ENCODE measurements at regions of chr16 and their contacts with region 1.

Region 1: DNA sequence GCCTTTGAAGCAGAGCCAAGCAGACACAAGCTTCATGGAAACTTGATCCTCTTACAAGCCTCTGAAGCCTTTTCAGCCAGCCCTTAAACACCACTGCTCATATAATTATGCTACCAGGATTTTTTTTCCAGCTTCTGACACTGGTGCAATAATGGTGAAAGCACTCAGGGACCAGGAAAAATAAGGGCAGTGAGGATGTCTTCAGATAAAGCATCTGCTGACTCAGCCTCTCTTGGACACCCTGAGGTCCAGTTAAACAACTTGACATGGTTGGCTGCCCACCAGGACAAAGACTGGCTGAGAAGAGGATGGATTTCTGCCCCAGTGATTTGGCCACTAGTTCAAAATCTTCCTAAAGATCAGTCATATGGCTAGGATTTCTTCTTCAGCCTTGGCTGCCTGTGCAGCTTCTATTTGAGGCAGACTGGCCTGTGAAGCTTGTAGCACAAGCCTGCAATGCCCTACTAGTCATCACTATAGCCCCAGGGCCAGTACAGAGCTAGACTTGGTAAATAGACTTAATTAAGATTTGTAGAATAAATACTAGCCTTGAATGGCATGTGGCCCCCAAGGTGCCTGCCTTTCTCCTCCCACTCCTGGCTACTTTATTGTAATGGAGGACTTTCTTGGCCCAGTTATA is 124.4 kb upstream of the N4BP1 start:
- DNase-seq: no peak
- H3K4me3 ChIP-seq: no peak overlapping the region
- H3K27ac ChIP-seq: no peak overlapping the region
- H3K4me1 ChIP-seq: no peaks in the 10 kb centered on the region
- H3K27me3 ChIP-seq: no peaks in the 10 kb centered on the region
- CTCF ChIP-seq: no peak

Region 2: DNA sequence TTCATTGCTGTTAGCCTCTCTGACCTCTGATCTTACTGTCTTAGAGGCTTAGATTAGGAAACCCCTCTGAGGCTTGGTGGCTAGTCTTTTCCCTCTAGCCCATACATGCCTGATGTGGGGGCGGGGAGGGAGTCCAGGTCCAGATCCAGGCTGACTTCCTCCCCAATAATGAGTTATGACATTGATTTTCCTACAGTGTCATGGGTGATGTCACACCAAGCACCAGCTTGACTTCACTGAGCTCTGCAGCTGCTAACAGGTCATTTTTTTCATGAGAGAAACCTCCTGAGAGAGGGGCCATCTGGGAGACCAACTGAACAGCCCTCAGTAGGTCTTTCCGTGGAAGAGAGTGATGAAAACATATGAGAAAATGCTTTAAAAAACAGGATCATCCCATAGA is 55.8 kb after region 1 on chr16:
- CTCF ChIA-PET with region 1: no interaction called
- dilution Hi-C with region 1: loop called (anchors 5 kb)
- in situ Hi-C with region 1: no loop called
- intact Hi-C with region 1: no loop called
- DNase-seq: no peak
- H3K4me3 ChIP-seq: no peak overlapping the region
- H3K27ac ChIP-seq: no peak overlapping the region
- H3K4me1 ChIP-seq: no peaks in the 10 kb centered on the region
- H3K27me3 ChIP-seq: no peaks in the 10 kb centered on the region
- CTCF ChIP-seq: no peak

Measured in mammary epithelial cell (primary cell).